HEK293 (cell line): ENCODE measurements at regions of chr2 and their contacts with region 1.

Region 1: DNA sequence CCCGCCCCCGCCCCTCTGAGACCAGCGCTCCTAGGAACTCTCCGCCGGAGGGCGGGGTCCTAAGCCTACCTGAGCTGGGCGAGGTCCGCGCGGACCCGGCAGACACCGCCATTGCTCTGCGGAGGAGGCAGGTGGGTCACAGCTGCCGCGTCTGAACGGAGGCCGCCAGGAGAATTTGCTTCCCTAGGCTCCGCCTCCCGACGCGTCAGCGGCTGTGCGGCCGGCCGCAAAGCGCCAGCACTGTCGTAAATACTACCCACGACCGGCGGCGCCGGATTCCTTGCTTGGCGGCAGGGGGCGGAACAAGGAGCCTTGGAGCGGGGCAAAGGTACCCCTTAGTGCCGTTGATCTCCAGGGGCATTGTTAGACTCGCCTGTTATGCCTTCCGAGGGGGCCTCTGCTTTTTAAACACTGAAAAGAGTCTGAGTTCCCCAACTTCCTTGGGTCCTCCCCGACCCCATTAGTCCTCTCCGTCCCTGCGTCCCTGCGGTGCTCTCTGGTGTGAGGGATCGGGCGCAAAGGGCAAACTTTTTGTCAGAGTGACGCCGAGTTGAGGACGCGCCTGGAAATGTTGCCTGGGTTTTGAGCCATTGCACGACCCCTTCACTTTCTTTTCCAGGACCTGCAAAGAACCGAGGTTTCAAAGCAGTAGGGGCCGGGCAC is at the start of gene GGCX:
- H3K4me3 ChIP-seq: peak within 1 kb of the TSS; percentile 80
- H3K27ac ChIP-seq: peak within 1 kb of the TSS; percentile 47
- H3K4me1 ChIP-seq: no peaks in the 10 kb centered on the region
- CTCF ChIP-seq: no peak; the same call in 1 of the 2 replicates

Region 2: DNA sequence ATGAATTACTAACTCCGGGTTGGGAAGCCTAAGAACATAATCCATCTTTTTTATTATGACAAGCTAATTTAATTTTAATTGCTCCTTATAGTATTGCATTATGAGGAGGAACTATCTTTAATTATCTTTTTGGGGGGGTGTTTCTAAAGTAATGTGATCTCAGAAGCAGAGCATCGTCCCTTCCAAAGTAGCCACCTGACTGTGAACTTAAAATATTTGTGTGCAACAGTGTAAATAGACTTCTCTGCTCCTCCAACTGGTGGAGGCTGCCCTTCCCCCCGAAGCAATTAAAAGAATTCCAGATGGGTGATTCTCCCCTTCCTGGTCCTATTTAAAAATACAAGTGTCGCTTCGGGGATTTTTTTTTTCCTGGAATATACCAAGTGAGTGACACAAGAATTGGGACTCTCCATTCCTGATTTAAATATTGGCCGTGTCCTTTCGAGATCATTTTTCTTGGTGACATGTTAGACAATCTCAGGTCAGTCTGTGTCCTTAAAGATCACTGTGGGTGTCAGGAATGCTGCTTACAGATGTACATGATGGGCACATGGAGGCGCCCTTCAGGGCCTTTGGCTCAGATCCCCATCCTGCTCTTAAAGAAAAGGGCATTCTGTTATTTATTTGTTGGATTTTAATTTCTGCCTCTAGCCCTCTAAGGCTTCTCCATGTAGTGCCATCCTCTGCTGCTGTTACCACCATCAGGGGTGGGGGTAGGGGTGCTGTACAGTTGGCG is 372.4 kb before region 1 on chr2:
- CTCF ChIA-PET with region 1: no interaction called
- POLR2A ChIA-PET with region 1: no interaction called
- H3K4me3 ChIP-seq: no peak overlapping the region
- H3K27ac ChIP-seq: no peak overlapping the region
- H3K4me1 ChIP-seq: peaks cover 8% of the 10 kb centered on the region; the same call in 1 of the 2 replicates
- CTCF ChIP-seq: no peak

Region 3: GRCh38 chr2:85420536-85421259 is 140.8 kb before region 1 on chr2:
- CTCF ChIA-PET with region 1: interaction called, 40 read pairs
- POLR2A ChIA-PET with region 1: interaction called, 4 read pairs
- H3K4me3 ChIP-seq: no peak overlapping the region
- H3K27ac ChIP-seq: no peak overlapping the region
- H3K4me1 ChIP-seq: peaks cover 4% of the 10 kb centered on the region
- CTCF ChIP-seq: peak; percentile 97

Region 4: DNA sequence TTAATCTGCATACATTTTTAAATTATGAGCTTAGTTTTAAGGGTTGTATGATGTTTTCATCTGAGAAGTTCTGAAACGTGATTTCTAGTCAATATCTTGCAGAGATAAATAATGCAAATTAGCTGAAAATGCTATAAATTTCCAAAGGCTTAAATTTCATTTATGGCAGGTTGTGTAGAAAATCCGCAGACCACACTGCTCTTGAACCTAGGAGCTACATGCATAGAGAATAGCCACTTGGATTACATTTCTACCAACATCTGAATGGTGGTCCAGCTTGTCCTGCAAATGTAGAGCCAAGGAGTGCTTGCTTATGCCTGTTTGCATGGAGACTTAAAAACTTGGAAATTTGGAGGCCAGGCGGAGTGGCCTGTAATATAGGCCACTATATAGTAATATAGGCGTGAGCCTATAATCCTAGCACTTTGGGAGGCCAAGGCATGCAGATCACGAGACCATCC is 15.6 kb before region 1 on chr2:
- CTCF ChIA-PET with region 1: interaction called, 15 read pairs
- POLR2A ChIA-PET with region 1: interaction called, 106 read pairs
- H3K4me3 ChIP-seq: no peak overlapping the region
- H3K27ac ChIP-seq: no peak overlapping the region
- H3K4me1 ChIP-seq: no peaks in the 10 kb centered on the region
- CTCF ChIP-seq: no peak

Region 5: DNA sequence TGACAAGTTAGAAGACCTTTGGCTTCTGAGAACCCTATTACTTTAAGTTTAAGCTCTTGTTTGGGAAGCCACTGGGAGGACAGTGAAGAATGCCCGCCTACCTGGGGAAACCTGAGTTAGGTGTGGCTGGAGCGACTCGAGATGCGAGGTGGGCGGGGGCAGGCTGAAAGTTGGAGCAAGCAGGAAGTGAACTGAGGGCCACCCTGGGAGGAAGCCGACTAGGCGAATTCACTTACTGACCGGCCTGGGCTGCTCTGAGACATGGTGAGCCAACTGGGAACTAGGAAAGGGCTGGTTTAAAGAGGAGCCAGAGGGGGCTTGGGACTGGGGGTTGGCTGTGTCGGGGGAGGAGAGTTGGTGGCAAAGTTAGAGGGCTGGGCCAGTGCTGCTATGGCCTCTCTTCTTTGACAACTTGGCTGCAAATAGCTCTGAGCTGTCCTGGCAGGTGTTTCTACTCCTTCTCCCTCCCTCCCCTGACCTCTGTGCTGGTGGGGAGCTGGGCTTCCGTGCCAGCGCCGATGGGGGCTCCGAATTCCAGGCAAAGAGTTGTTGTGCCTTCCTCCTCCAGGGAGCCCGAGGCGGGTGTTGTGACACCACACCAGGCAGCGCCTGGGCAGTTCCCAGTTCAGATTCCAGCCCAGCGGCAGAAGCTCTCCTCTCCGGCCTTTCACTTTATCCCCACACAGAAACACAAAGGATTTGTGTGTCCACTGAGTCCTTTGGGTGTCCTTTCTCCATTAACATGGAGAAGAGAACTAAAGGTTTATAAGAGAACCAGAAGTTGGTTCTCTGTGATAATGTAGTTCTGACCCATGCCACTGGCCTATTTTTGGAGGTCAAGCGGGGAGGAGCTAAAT is 16.2 kb after region 1 on chr2 and contains the start of gene VAMP8:
- CTCF ChIA-PET with region 1: interaction called, 4 read pairs
- POLR2A ChIA-PET with region 1: interaction called, 19 read pairs
- H3K4me3 ChIP-seq: peak within 1 kb of the TSS; percentile 55
- H3K27ac ChIP-seq: peak within 1 kb of the TSS; percentile 56
- H3K4me1 ChIP-seq: peaks cover 14% of the 10 kb centered on the region
- CTCF ChIP-seq: no peak

Region 6: GRCh38 chr2:85595301-85596025 is 34.0 kb after region 1 on chr2 and contains the start of gene RNF181:
- CTCF ChIA-PET with region 1: interaction called, 4 read pairs
- POLR2A ChIA-PET with region 1: interaction called, 32 read pairs
- H3K4me3 ChIP-seq: peak within 1 kb of the TSS; percentile 79
- H3K27ac ChIP-seq: peak within 1 kb of the TSS; percentile 77
- H3K4me1 ChIP-seq: 0 out of 2 replicates have a peak, but pooled peaks cover 3% of the 10 kb centered on the region
- CTCF ChIP-seq: no peak

Region 7: GRCh38 chr2:85602476-85603234 is 41.2 kb after region 1 on chr2 and contains the start of gene TMEM150A:
- CTCF ChIA-PET with region 1: interaction called, 4 read pairs
- POLR2A ChIA-PET with region 1: interaction called, 14 read pairs
- H3K4me3 ChIP-seq: peak within 1 kb of the TSS; percentile 73
- H3K27ac ChIP-seq: peak within 1 kb of the TSS; percentile 51; the same call in 1 of the 2 replicates
- H3K4me1 ChIP-seq: peaks cover 9% of the 10 kb centered on the region
- CTCF ChIP-seq: 0 out of 2 replicates have a peak, but pooled peaks have one; percentile 29

Region 8: DNA sequence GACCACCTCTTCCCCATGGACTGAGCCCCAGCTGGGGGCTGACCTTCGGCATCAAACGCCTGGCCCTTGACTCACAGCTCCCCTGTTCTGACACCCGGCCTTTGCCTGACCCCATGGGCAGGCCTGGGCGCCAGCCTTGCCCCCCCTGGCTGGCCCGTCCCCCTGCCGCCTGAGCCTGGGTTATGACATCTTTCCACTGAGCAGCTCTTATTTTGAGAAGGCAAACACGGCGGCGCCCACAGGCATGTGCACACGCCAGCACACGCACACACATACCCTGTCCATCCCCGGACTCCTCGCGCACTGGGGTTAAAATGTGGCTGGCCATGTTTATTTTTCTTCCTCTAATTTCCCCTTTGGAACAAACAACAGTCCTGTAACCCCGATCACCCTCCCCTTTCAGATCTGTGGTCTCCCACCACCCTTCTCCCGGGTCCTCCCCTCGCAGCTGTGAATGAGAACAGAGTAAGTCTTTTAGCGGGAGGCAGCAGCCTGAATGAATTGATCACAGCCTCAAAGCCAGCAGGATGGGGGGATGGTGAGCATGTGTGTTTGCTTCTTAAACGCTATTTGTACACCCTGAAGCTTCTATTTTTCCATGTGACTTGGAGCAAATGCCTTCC is 180.5 kb after region 1 on chr2:
- CTCF ChIA-PET with region 1: no interaction called
- POLR2A ChIA-PET with region 1: no interaction called
- H3K4me3 ChIP-seq: no peak overlapping the region
- H3K27ac ChIP-seq: peak overlapping the region; percentile 17; the same call in 1 of the 2 replicates
- H3K4me1 ChIP-seq: peaks cover 8% of the 10 kb centered on the region
- CTCF ChIP-seq: no peak